ENCODE measurements at regions of chr14 and their contacts with region 1.

Region 1: DNA sequence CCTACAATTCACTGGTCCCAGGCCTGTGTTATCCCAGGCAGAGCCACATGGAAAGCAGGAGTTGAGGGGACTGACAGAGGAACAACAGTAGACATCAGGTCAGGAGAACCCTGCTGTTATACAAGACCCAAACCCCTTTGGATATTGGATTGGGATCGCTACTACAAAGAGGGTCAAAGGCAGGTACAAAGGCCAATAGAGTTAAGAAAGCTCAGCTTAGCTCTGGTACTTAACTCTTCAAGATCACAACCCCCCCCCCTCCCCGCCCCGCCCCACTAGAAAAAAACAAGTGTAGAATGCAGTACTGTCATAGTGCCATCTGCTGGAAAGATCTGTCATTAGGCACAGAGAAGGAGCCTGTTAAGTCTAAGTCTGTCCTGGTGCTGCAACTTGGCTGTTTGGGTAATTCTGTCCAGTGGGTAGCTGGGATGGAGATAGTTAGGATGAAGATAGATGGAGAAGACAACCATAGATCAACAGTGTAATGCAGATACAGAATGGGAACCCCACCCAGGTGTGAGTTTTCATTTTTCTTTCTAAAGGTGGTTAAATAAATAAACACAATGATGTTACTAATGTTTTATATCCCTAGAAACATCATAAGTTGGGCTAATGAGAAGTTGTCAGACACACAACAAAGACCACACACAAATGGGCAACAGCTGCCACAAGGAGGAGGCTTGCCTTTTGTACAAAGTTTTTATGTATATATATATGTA is 17.2 kb downstream of the REM2 start:
- DNase-seq: no peak
- H3K4me3 ChIP-seq: no peak overlapping the region
- CTCF ChIP-seq: peak; percentile 72

Region 2: GRCh38 chr14:22386924-22387775 is 513.1 kb before region 1 on chr14:
- CTCF ChIA-PET with region 1: interaction called, 16 read pairs
- POLR2A ChIA-PET with region 1: no interaction called
- DNase-seq: no peak
- H3K4me3 ChIP-seq: peak overlapping the region; percentile 13
- CTCF ChIP-seq: peak; percentile 68

Region 3: GRCh38 chr14:22478670-22479069 is 421.6 kb before region 1 on chr14:
- CTCF ChIA-PET with region 1: no interaction called
- POLR2A ChIA-PET with region 1: no interaction called
- DNase-seq: no peak
- H3K4me3 ChIP-seq: no peak overlapping the region
- CTCF ChIP-seq: no peak

Region 4: GRCh38 chr14:22658946-22659345 is 241.3 kb before region 1 on chr14:
- CTCF ChIA-PET with region 1: interaction called, 11 read pairs
- POLR2A ChIA-PET with region 1: no interaction called
- DNase-seq: no peak
- H3K4me3 ChIP-seq: no peak overlapping the region
- CTCF ChIP-seq: no peak

Region 5: DNA sequence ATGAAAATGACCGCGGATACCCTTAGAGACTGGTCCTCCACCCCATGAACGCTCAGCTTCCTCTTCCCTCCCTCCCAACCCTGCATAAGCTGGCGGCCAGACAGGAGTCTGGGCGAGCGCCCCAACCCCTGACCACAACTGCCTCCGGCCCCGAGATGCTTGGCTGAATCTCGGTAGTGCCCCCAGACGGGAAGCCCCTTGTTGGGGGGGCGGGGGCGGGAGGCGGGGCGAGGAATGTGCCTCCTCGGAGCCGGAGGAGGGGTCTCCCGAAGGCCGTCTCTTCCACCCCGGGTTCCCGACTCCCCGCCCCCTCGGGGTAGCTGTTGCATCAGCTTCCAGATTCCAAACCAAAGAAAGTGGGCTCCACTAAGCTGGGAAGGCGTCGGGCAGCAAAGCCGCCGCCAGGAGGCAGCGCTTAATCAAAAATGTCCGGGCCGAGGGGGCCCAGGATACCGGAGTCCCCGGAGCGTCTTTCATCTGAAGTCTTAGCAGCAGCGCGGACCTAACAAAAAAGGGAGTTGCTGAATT is 77.6 kb before region 1 on chr14:
- CTCF ChIA-PET with region 1: interaction called, 83 read pairs
- POLR2A ChIA-PET with region 1: no interaction called
- DNase-seq: no peak
- H3K4me3 ChIP-seq: peak overlapping the region; percentile 24
- CTCF ChIP-seq: peak; percentile 78

Region 6: GRCh38 chr14:22872033-22872832 is 28.0 kb before region 1 on chr14:
- CTCF ChIA-PET with region 1: interaction called, 164 read pairs
- POLR2A ChIA-PET with region 1: interaction called, 4 read pairs
- DNase-seq: no peak
- H3K4me3 ChIP-seq: peak overlapping the region; percentile 81
- CTCF ChIP-seq: peak; percentile 87

Region 7: GRCh38 chr14:22918804-22919600 is 18.8 kb after region 1 on chr14 and contains the start of gene RBM23:
- CTCF ChIA-PET with region 1: interaction called, 97 read pairs
- POLR2A ChIA-PET with region 1: interaction called, 4 read pairs
- DNase-seq: peak; percentile 99
- H3K4me3 ChIP-seq: peak within 1 kb of the TSS; percentile 76
- CTCF ChIP-seq: no peak

Measured in AG04449 (cell line).